ENCODE measurements at regions of chr14 and their contacts with region 1.

Region 1: GRCh38 chr14:71339650-71340415 is 432.6 kb downstream of the PCNX1 start:
- DNase-seq: peak in 1 of 2 experiments; percentile 29
- H3K4me3 ChIP-seq: no peak overlapping the region
- H3K4me3 Mint-ChIP-seq: peak overlapping the region; percentile 32
- H3K27ac Mint-ChIP-seq: peak overlapping the region; percentile 5
- H3K4me1 ChIP-seq: peaks cover 67% of the 10 kb centered on the region
- H3K4me1 Mint-ChIP-seq: peaks cover 54% of the 10 kb centered on the region
- H3K27me3 ChIP-seq: no peaks in the 10 kb centered on the region
- H3K27me3 Mint-ChIP-seq: no peaks in the 10 kb centered on the region
- CTCF ChIP-seq: no peak

Region 2: DNA sequence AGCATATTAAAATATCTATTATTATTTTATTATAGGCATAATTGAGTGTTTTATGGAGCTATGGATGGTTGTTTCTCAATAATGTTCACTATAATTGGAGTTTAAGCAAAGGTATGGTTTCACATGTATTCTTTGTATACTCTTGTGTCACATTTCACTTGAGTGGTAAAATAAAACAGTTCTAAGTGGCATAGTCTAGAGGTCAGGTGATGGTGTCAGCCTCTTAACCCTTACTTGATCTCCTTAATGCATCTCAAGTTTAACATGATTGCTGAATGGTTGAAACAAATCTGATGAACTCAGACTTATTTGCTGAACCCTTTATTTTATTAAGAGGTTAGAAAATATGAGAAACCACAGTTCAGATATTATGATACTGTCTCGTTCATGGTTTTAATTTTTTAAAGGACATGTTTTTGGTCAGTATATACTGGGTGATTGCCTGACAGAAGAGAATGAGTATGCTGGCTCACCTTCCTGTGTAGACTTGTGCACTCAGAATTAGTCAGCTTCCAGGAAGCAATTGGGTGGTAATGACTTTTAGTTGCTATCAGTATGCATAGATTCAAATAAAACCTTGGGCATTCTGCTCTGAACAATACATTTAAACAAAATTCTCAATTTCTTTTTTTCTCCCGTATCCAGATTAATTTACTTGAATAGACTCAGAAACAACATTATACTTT is 32.0 kb after region 1 on chr14:
- CTCF ChIA-PET with region 1: no interaction called
- POLR2A ChIA-PET with region 1: no interaction called
- intact Hi-C with region 1: loop called (anchors 5 kb)
- DNase-seq: no peak
- H3K4me3 ChIP-seq: no peak overlapping the region
- H3K4me3 Mint-ChIP-seq: no peak overlapping the region
- H3K27ac Mint-ChIP-seq: peak overlapping the region; percentile 39
- H3K4me1 ChIP-seq: peaks cover 14% of the 10 kb centered on the region
- H3K4me1 Mint-ChIP-seq: peaks cover 7% of the 10 kb centered on the region
- H3K27me3 ChIP-seq: no peaks in the 10 kb centered on the region
- H3K27me3 Mint-ChIP-seq: no peaks in the 10 kb centered on the region
- CTCF ChIP-seq: no peak

Region 3: DNA sequence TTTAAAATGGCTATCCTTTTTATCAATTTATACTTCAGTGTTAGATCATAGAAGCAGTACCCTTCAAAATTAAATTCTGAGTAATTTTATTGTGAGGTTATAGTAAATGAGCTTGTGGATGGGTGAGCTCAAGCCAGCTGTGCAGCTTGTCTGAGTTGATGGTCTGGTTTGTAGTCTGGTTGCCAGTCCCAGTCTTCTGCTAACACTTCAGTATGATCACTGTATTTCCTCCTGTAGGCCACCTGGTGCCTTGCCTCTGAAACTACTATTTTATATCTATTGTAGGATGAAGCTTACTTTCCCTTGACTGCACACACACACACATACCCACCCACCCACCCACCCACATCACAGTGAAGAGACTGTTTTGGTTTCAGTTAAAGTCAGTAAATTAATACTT is 63.8 kb after region 1 on chr14:
- CTCF ChIA-PET with region 1: interaction called, 3 read pairs
- POLR2A ChIA-PET with region 1: no interaction called
- intact Hi-C with region 1: loop called (anchors 5 kb)
- DNase-seq: peak; percentile 39 to 47
- H3K4me3 ChIP-seq: no peak overlapping the region
- H3K4me3 Mint-ChIP-seq: no peak overlapping the region
- H3K27ac Mint-ChIP-seq: no peak overlapping the region
- H3K4me1 ChIP-seq: peaks cover 11% of the 10 kb centered on the region; the same call in 1 of the 2 replicates
- H3K4me1 Mint-ChIP-seq: peaks cover 10% of the 10 kb centered on the region
- H3K27me3 ChIP-seq: no peaks in the 10 kb centered on the region
- H3K27me3 Mint-ChIP-seq: no peaks in the 10 kb centered on the region
- CTCF ChIP-seq: peak; percentile 23 to 46

Region 4: DNA sequence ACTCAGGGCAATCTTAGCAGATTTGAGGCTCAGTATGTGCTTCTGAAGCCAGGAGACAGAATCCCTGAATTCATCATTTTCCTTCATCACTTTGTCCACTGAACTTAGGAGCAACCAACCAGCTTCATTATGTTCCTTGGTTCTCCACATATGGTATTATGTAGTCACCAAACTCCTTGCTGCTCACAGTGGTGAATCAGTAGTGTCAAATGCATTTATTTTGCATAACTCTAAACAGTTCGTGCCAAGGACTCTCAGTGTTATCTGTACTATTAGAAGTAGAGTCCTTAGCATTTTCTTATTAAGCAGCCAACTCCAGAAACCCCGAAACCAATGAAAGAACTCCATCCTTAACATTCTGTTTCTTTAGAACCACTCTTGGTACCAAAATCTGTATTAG is 125.5 kb after region 1 on chr14:
- CTCF ChIA-PET with region 1: no interaction called
- POLR2A ChIA-PET with region 1: no interaction called
- intact Hi-C with region 1: no loop called
- DNase-seq: no peak
- H3K4me3 ChIP-seq: no peak overlapping the region
- H3K4me3 Mint-ChIP-seq: no peak overlapping the region
- H3K27ac Mint-ChIP-seq: no peak overlapping the region
- H3K4me1 ChIP-seq: no peaks in the 10 kb centered on the region
- H3K4me1 Mint-ChIP-seq: no peaks in the 10 kb centered on the region
- H3K27me3 ChIP-seq: no peaks in the 10 kb centered on the region
- H3K27me3 Mint-ChIP-seq: no peaks in the 10 kb centered on the region
- CTCF ChIP-seq: no peak

Region 5: GRCh38 chr14:71610149-71610548 is 270.3 kb after region 1 on chr14:
- CTCF ChIA-PET with region 1: no interaction called
- POLR2A ChIA-PET with region 1: no interaction called
- intact Hi-C with region 1: no loop called
- DNase-seq: no peak
- H3K4me3 ChIP-seq: no peak overlapping the region
- H3K4me3 Mint-ChIP-seq: no peak overlapping the region
- H3K27ac Mint-ChIP-seq: no peak overlapping the region
- H3K4me1 ChIP-seq: peaks cover 16% of the 10 kb centered on the region
- H3K4me1 Mint-ChIP-seq: peaks cover 24% of the 10 kb centered on the region
- H3K27me3 ChIP-seq: no peaks in the 10 kb centered on the region
- H3K27me3 Mint-ChIP-seq: no peaks in the 10 kb centered on the region
- CTCF ChIP-seq: no peak

Region 6: DNA sequence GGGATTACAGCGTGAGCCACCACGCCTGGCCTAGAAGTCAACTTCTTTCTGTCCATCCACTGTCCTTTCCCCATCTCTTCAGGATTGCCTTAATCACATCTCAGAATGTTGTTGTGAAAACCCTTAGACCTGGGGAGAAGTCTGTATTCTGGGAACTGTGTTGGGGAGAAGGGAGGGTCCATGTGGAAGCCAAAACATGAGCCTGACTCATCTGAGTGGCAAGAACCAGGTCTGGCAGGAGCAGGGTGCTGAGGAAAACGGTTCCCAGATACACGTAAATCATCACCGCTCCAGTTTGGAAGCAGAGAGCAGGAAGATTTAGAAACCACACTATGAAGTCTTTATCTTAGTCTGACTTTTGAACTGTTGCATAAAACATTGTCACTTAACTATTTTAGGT is 346.8 kb after region 1 on chr14:
- CTCF ChIA-PET with region 1: no interaction called
- POLR2A ChIA-PET with region 1: interaction called, 5 read pairs
- intact Hi-C with region 1: loop called (anchors 5 kb)
- DNase-seq: no peak
- H3K4me3 ChIP-seq: no peak overlapping the region
- H3K4me3 Mint-ChIP-seq: no peak overlapping the region
- H3K27ac Mint-ChIP-seq: peak overlapping the region; percentile 57
- H3K4me1 ChIP-seq: peaks cover 45% of the 10 kb centered on the region
- H3K4me1 Mint-ChIP-seq: peaks cover 30% of the 10 kb centered on the region
- H3K27me3 ChIP-seq: no peaks in the 10 kb centered on the region
- H3K27me3 Mint-ChIP-seq: no peaks in the 10 kb centered on the region
- CTCF ChIP-seq: no peak